MCF 10A (cell line): ENCODE measurements at regions of chr4 and their contacts with region 1.

Region 1: GRCh38 chr4:38872604-38873006 is 5.0 kb downstream of the FAM114A1 start:
- DNase-seq: peak; percentile 69
- H3K4me3 Mint-ChIP-seq: no peak overlapping the region
- H3K27ac Mint-ChIP-seq: no peak overlapping the region
- H3K4me1 Mint-ChIP-seq: peaks cover 26% of the 10 kb centered on the region
- H3K27me3 Mint-ChIP-seq: no peaks in the 10 kb centered on the region
- CTCF ChIP-seq: no peak

Region 2: DNA sequence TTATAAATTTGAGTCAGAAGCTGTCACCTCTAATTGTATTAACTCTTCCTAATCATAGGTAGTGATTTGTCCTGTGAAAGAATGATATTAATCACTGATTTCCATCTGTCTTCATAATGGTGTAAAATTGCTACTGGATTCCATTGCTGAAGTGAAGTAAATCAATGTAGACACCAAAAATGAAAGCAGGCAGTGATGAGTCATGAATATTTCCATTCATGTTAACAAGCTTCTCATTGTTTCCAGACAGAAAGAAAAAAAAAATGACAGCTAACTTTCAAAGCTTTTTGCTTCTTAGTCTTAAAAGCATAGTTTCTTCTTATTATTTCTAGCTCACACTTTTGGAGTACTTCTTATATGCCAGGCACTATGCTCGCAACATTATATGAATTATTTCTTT is 16.5 kb after region 1 on chr4:
- CTCF ChIA-PET with region 1: interaction called, 4 read pairs
- POLR2A ChIA-PET with region 1: interaction called, 20 read pairs
- intact Hi-C with region 1: no loop called
- DNase-seq: peak; percentile 64
- H3K4me3 Mint-ChIP-seq: peak overlapping the region; percentile 21
- H3K27ac Mint-ChIP-seq: peak overlapping the region; percentile 49
- H3K4me1 Mint-ChIP-seq: peaks cover 6% of the 10 kb centered on the region
- H3K27me3 Mint-ChIP-seq: no peaks in the 10 kb centered on the region
- CTCF ChIP-seq: no peak